Activated CD8-positive, alpha-beta memory T cell treated with anti-CD3 and anti-CD28 coated beads, Interleukin-2, amount 10 ng/mL, durations not matched to agents 7 days and 5 days (primary cell): ENCODE measurements at regions of chr10 and their contacts with region 1.

Region 1: GRCh38 chr10:104353325-104354048 is at the start of gene CFAP58:
- DNase-seq: peak; percentile 96
- ATAC-seq: peak; percentile 94
- H3K4me3 Mint-ChIP-seq: no peak within 1 kb of the TSS
- H3K27ac Mint-ChIP-seq: peak within 1 kb of the TSS; percentile 82
- H3K4me1 Mint-ChIP-seq: peaks cover 10% of the 10 kb centered on the region
- H3K27me3 Mint-ChIP-seq: no peaks in the 10 kb centered on the region
- total RNA-seq, gene CFAP58: 0.56 to 0.64 TPM

Region 2: DNA sequence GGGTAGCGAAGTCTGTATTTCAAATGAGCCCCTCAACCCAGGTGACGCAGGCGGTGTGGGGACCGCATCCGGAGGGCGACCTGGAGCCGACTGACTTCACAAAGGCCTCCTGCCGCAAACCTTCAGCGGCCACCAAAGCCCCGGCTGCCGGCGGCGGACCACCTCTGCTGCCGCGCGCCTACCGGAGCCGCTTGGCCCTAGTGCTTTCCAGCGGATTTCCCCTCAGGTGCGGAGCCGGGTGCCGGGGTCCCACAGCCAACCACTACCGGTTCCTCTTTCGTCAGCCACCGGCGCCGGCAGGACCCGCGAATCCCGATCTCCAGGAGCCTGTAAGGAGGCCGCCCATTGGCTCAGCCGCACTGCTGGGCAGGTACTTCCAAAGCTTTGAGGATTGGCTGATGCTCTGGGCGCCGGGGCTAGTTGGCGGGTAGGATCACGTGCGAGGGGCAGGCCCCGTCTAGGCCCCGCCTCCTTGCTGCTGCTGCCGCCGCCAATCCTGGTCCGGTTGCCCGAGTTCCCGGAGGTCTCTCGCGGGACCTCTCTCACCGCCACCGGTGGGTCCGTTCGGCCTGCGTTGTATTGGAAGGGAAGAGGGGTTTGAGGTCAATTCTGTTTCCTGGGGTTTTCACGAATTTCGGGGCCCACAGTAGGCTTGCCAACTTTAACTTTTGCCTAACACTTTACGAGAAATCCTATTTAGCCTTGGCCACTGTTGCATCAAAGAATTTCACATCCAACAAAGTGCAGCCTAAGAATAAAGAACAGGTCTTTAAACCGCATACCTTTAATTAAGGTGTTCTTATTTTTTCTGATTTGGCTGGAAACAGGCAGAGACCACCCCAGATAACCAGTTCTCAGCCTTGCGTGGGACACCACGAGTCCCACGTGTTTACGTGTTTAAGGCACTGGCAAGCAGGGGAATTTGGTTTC is 84.5 kb before region 1 on chr10 and contains the start of gene GSTO2:
- CTCF ChIA-PET with region 1: interaction called, 57 read pairs
- DNase-seq: peak; percentile 100
- ATAC-seq: peak; percentile 97
- H3K4me3 Mint-ChIP-seq: peak within 1 kb of the TSS; percentile 91
- H3K27ac Mint-ChIP-seq: peak within 1 kb of the TSS; percentile 94
- H3K4me1 Mint-ChIP-seq: peaks cover 45% of the 10 kb centered on the region
- H3K27me3 Mint-ChIP-seq: peaks cover 4% of the 10 kb centered on the region
- total RNA-seq, gene GSTO2: 0.96 to 1.3 TPM

Region 3: GRCh38 chr10:104291439-104291951 is 62.0 kb before region 1 on chr10:
- CTCF ChIA-PET with region 1: interaction called, 290 read pairs
- DNase-seq: peak; percentile 90
- ATAC-seq: peak; percentile 100
- H3K4me3 Mint-ChIP-seq: no peak overlapping the region
- H3K27ac Mint-ChIP-seq: no peak overlapping the region
- H3K4me1 Mint-ChIP-seq: peaks cover 12% of the 10 kb centered on the region
- H3K27me3 Mint-ChIP-seq: peaks cover 37% of the 10 kb centered on the region

Region 4: GRCh38 chr10:104308439-104308903 is 45.0 kb before region 1 on chr10:
- CTCF ChIA-PET with region 1: interaction called, 270 read pairs
- DNase-seq: peak; percentile 57
- ATAC-seq: peak; percentile 59
- H3K4me3 Mint-ChIP-seq: no peak overlapping the region
- H3K27ac Mint-ChIP-seq: peak overlapping the region; percentile 69
- H3K4me1 Mint-ChIP-seq: peaks cover 39% of the 10 kb centered on the region
- H3K27me3 Mint-ChIP-seq: no peaks in the 10 kb centered on the region

Region 5: GRCh38 chr10:104328896-104329710 is 24.4 kb before region 1 on chr10:
- CTCF ChIA-PET with region 1: interaction called, 20 read pairs
- DNase-seq: peak; percentile 88
- ATAC-seq: peak; percentile 86
- H3K4me3 Mint-ChIP-seq: peak overlapping the region; percentile 63
- H3K27ac Mint-ChIP-seq: peak overlapping the region; percentile 95
- H3K4me1 Mint-ChIP-seq: peaks cover 92% of the 10 kb centered on the region
- H3K27me3 Mint-ChIP-seq: no peaks in the 10 kb centered on the region

Region 6: GRCh38 chr10:104376784-104377300 is 23.4 kb after region 1 on chr10:
- CTCF ChIA-PET with region 1: no interaction called
- DNase-seq: no peak
- ATAC-seq: no peak
- H3K4me3 Mint-ChIP-seq: no peak overlapping the region
- H3K27ac Mint-ChIP-seq: no peak overlapping the region
- H3K4me1 Mint-ChIP-seq: peaks cover 5% of the 10 kb centered on the region
- H3K27me3 Mint-ChIP-seq: peaks cover 55% of the 10 kb centered on the region

Region 7: DNA sequence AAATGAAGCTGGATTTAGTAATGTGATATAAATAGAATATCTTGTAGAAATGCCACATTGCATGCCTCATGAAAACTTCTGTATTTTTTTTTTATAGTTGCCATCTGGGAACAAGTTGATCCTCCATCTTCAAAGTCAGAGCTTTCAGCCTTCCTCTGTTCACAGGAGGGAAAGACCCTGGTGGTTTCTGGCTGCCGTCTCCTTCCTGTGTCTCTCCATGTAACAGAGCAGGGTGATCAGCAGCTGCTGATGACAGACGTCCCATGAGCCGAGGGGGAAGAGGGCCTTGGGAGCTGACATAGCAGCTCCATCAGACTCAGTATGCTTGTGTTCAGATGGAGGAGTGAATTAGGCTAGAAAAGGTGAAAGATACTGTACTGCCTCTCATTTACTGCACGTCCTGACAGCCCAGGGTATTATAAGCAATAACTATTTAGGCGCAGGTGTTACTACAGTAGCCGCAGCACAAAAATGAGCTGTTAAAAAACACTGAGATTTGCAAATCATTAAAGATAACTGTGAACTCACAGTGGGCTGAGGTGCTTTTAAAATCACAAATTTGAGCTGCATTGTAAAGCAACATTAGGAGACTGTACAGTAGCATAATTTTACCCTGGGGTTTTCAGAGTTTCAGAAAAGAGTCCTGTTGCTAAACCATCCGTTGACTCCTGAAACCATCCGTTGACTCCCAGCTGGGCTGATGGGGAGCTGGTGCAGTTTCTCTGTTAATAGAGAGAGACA is 103.5 kb after region 1 on chr10:
- CTCF ChIA-PET with region 1: no interaction called
- DNase-seq: no peak
- ATAC-seq: no peak
- H3K4me3 Mint-ChIP-seq: no peak overlapping the region
- H3K27ac Mint-ChIP-seq: no peak overlapping the region
- H3K4me1 Mint-ChIP-seq: no peaks in the 10 kb centered on the region
- H3K27me3 Mint-ChIP-seq: peaks cover 26% of the 10 kb centered on the region